GM10248 (cell line): ENCODE measurements at regions of chr14 and their contacts with region 1.

Region 1: GRCh38 chr14:54329082-54329695 is 67.6 kb upstream of the CDKN3 start:
- DNase-seq: peak; percentile 50
- CTCF ChIP-seq: peak; percentile 80

Region 2: DNA sequence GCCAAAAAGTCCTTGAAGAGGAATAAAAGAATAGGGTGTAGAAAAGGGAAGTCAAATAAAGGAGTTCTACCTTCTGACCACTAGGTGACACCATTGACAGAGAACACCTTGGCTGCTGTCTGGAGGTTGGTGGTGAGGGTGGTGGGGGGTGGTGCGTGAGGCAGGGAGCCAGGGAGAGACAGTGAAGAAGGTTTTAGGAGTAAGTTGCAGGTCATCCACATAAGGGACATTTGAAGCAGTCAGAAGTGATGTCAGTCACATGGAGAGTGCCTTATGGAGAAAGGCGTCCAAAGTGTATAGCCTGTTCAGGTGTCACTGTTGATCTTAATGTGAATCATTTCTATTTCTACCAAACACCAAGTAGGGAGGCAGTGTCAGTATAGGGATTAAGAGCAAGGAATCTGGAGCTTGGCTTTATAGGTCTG is 896.8 kb before region 1 on chr14:
- CTCF ChIA-PET with region 1: interaction called, 14 read pairs
- POLR2A ChIA-PET with region 1: no interaction called
- DNase-seq: peak; percentile 60
- CTCF ChIP-seq: peak; percentile 63

Region 3: DNA sequence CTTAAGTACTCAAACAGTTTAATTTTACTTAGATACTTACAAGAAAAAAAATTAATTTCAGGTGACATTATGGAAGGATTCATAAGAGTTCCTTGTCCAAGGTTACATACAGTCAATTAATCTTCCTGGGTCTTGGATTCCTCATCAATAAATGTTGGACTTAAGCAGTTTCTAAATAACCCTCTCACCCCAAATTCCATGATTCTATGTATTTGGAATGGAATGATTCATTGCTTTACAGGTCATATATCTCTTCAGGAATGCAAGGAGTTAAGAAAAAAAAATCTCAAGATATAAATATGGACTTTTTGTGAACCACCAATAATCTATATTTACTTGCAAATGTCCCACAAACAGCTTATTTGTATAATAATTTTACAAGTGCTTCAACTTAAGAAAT is 288.3 kb before region 1 on chr14:
- CTCF ChIA-PET with region 1: no interaction called
- POLR2A ChIA-PET with region 1: no interaction called
- DNase-seq: no peak
- CTCF ChIP-seq: no peak

Region 4: DNA sequence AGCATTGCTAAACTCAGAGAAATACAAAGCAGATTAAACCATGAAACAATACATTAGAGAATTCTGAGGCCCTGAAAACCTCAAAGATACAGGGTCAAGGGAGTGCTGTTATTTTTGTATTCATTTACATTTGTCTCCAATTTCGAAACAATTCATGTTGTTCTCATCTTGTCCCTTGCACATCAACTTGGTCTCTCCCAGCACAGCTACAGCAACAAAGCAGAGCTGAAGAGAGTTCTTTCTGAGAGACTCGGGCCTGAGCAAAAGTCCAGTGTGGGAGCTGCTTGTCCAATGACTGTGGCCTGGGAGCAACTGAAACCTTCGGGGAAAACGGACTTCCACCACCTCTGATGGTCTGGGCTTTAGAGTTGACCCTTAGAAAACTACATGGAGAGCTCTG is 11.8 kb before region 1 on chr14:
- CTCF ChIA-PET with region 1: interaction called, 11 read pairs
- POLR2A ChIA-PET with region 1: no interaction called
- DNase-seq: no peak
- CTCF ChIP-seq: no peak

Region 5: GRCh38 chr14:54374117-54374884 is 45.1 kb after region 1 on chr14:
- CTCF ChIA-PET with region 1: no interaction called
- POLR2A ChIA-PET with region 1: no interaction called
- DNase-seq: no peak
- CTCF ChIP-seq: no peak